Cardiac septum (tissue), 1 donor: ENCODE measurements at regions of chr7 and their contacts with region 1.

Region 1: GRCh38 chr7:67484244-67484751 is 487.7 kb downstream of the TYW1 start:
- DNase-seq: no peak

Region 2: DNA sequence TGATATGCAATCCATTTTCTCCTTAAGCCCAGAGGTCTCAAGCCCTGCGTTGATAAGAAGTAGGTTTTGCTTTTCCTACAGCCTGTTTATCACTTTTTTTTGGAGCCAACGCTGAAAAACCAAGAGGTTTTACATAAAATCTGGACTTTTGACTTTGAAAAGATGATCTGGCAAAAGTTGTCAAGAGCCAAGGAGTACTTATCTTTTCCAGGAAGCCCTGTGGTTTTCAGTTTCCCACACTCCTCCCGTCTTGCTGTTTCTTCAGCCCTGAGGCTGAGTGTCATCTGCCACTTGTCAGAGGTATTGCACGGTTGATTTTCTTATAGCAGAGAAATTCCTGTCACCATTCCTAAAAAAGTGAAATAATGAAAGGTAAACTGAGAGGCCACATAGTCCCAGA is 378.9 kb before region 1 on chr7:
- intact Hi-C with region 1: no loop called
- DNase-seq: no peak

Region 3: DNA sequence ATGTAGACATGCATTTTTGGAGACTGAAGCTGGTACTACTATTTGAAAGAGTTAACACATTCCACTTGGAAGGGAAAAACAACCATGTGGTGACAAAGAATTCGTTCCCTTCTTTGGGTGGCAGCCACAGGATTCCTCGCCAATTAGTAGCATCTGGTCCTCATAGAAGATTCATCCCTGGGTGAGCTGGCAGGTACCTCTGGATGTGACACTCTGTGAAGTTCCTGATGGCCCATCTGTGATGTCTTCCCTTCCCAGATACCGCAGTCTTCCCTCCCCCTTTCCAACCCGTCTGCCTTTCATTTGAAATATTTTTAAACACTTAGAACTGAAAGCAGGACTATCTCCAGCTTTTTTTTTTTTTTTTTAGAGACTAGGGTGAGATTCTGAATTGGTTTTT is 81.8 kb after region 1 on chr7:
- intact Hi-C with region 1: no loop called
- DNase-seq: no peak

Region 4: DNA sequence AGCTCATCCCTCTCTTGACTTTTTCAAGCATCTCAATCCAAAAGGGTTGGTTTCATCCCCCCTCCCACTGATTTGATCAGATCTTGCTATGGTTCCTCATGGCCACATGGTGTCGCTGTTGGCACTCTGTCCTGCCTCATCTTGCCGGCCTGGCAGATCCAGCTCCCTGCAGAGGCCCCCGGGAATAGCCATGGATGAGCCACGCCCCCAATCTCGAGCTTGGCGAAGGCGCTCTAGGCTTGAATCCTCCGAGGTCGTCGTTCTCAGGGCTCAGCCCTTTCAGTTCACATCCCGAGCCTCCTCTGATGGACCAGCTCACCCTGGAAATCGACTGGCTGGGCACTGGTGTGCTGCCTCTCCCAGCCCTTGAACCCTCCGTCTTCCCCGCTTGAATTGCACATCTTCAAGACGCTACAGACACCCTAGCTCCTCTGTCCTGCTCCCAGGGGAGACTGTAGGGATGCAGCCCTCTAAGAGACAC is 141.0 kb after region 1 on chr7:
- intact Hi-C with region 1: loop called (anchors 10 kb)
- DNase-seq: peak; percentile 81